Panc1 (cell line): ENCODE measurements at regions of chr7 and their contacts with region 1.

Region 1: DNA sequence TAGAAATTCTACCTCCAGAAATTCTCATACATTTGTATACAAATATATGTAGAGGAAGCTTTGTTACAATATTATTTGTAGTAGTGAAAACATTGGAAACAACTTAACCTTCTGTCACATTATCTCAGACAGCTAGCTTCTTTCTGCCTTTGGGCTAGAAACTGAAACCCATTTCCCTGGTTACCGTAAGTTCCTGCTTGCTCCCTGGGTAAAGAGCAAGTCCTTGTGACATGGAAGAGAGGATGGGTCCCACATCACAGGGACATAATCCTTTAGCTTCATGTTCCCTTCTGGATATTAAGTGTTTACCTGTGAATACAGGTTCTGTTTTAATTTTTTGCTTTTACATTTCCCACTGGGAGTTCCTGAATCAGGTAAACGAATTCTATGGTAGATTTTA is 41.8 kb downstream of the KLHDC10 start:
- DNase-seq: no peak
- ATAC-seq: no peak
- H3K4me3 ChIP-seq: no peak overlapping the region
- H3K27ac ChIP-seq: no peak overlapping the region
- H3K4me1 ChIP-seq: no peaks in the 10 kb centered on the region
- H3K27me3 ChIP-seq: no peaks in the 10 kb centered on the region
- CTCF ChIP-seq: no peak

Region 2: GRCh38 chr7:130695840-130696239 is 583.7 kb after region 1 on chr7:
- CTCF ChIA-PET with region 1: no interaction called
- POLR2A ChIA-PET with region 1: interaction called, 10 read pairs
- in situ Hi-C with region 1: no loop called
- intact Hi-C with region 1: no loop called
- DNase-seq: peak; percentile 15
- ATAC-seq: peak; percentile 53; the same call in 1 of the 2 replicates
- H3K4me3 ChIP-seq: no peak overlapping the region
- H3K27ac ChIP-seq: no peak overlapping the region
- H3K4me1 ChIP-seq: no peaks in the 10 kb centered on the region
- H3K27me3 ChIP-seq: no peaks in the 10 kb centered on the region
- CTCF ChIP-seq: peak; percentile 64